ENCODE measurements at regions of chr5 and their contacts with region 1.

Region 1: GRCh38 chr5:94793113-94793815 is 174.8 kb downstream of the SLF1 start:
- DNase-seq: peak; percentile 46
- H3K4me3 Mint-ChIP-seq: peak overlapping the region; percentile 24
- H3K27ac Mint-ChIP-seq: peak overlapping the region; percentile 88
- H3K4me1 Mint-ChIP-seq: peaks cover 32% of the 10 kb centered on the region
- H3K27me3 Mint-ChIP-seq: no peaks in the 10 kb centered on the region

Region 2: GRCh38 chr5:93620487-93621326 is 1172.6 kb before region 1 on chr5:
- CTCF ChIA-PET with region 1: no interaction called
- intact Hi-C with region 1: loop called (anchors 2 kb)
- DNase-seq: peak; percentile 64
- H3K4me3 Mint-ChIP-seq: peak overlapping the region; percentile 76
- H3K27ac Mint-ChIP-seq: no peak overlapping the region
- H3K4me1 Mint-ChIP-seq: peaks cover 24% of the 10 kb centered on the region
- H3K27me3 Mint-ChIP-seq: peaks cover 43% of the 10 kb centered on the region

Region 3: GRCh38 chr5:94389515-94389899 is 403.8 kb before region 1 on chr5:
- CTCF ChIA-PET with region 1: no interaction called
- intact Hi-C with region 1: loop called (anchors 1 kb)
- DNase-seq: no peak
- H3K4me3 Mint-ChIP-seq: no peak overlapping the region
- H3K27ac Mint-ChIP-seq: no peak overlapping the region
- H3K4me1 Mint-ChIP-seq: peaks cover 3% of the 10 kb centered on the region
- H3K27me3 Mint-ChIP-seq: no peaks in the 10 kb centered on the region

Region 4: DNA sequence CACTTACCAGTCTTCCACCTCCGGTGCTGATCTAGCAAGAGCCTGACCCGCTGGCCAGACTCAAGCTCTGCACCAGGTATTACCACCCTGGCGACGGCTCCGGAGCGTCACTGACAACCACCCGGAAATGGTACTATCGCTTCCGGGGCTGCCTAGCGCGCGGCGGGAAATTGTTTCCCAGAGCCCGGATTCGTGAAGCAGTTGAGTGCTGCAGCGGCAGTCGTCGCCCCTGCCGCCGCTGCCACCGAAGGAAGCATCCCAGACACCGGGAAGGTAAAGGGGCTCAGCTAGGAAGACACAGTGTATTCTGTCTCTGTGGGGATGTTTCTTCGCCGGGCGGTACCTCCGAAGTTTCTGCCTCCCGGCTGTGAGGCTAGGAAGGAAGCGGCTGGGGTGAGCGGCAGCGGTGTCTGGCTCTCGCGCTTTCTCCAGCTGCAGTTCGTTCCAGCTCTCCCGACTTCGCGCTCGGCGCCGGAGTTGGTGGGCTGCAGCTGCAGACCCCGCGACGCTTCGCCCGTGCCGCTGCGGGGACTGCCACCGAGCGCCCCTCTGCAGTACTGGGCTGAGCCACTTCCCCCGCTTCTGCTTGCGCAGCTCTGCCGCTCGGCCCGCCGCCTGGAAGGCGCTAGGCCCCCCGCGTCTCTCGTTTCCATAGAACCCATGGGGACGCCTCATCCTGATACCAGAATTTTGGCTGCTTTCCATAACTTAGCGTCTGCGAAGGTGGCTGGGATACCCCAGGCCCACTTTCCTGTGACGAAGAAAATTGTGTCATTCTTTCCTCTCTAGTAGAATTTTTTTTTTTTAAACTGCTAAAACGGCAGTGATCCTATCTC is 174.6 kb before region 1 on chr5 and contains the starts of genes KIAA0825 and SLF1:
- CTCF ChIA-PET with region 1: no interaction called
- intact Hi-C with region 1: loop called (anchors 1 kb)
- DNase-seq: peak; percentile 93
- H3K4me3 Mint-ChIP-seq: peak within 1 kb of the TSS; percentile 96
- H3K27ac Mint-ChIP-seq: peak within 1 kb of the TSS; percentile 93
- H3K4me1 Mint-ChIP-seq: peaks cover 34% of the 10 kb centered on the region
- H3K27me3 Mint-ChIP-seq: no peaks in the 10 kb centered on the region
- total RNA-seq, gene KIAA0825: 0.07 to 0.24 TPM
- total RNA-seq, gene SLF1: 12.4 to 12.8 TPM

Region 5: GRCh38 chr5:94751460-94751859 is 41.8 kb before region 1 on chr5:
- CTCF ChIA-PET with region 1: no interaction called
- intact Hi-C with region 1: loop called (anchors 1 kb)
- DNase-seq: no peak
- H3K4me3 Mint-ChIP-seq: no peak overlapping the region
- H3K27ac Mint-ChIP-seq: no peak overlapping the region
- H3K4me1 Mint-ChIP-seq: peaks cover 2% of the 10 kb centered on the region
- H3K27me3 Mint-ChIP-seq: peaks cover 3% of the 10 kb centered on the region

Region 6: DNA sequence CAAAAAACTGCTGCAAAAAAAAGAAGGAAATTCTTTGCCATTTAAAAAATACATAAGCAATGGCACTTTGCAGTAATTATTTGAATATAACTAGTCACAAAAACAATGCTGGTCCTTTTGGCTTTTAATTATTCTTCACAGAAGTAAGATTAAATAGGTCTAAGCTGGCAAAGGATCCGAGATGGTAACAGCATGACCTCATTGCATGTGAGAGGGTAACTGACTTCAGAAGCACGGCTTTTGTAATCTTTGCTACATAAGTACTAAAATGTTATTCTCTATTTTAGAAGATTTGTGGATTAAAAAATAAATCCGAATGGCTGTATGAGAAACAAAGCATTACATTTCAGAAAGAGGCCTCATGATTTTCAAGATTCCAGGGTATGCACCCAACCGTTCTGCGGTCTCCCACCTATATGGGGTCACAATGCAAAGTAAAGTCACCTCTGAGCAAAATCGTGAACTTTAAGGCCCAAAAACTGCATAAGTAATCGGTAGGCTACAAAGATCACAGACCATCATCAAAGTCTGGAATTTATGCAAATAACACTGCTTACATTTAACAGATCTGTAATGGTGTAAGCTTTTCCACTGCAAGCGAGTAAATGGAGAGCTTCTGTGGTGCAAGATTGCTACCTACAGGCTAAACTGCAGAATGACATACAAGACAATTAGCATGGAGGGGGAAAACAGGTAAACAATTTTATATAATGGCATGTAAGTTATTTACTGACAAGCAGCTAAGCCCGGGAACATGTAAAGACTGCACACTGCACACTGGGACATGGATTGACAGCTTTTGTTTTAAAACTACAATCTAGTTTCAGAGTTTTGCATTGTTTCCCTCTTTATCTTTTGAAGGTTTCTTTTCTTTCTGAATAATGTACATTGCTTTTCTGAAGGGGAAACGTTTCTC is 56.8 kb after region 1 on chr5:
- CTCF ChIA-PET with region 1: no interaction called
- intact Hi-C with region 1: loop called (anchors 1 kb)
- DNase-seq: peak; percentile 40
- H3K4me3 Mint-ChIP-seq: no peak overlapping the region
- H3K27ac Mint-ChIP-seq: no peak overlapping the region
- H3K4me1 Mint-ChIP-seq: peaks cover 3% of the 10 kb centered on the region
- H3K27me3 Mint-ChIP-seq: peaks cover 6% of the 10 kb centered on the region

Region 7: GRCh38 chr5:95591490-95591901 is 798.2 kb after region 1 on chr5:
- CTCF ChIA-PET with region 1: no interaction called
- intact Hi-C with region 1: loop called (anchors 2 kb)
- DNase-seq: no peak
- H3K4me3 Mint-ChIP-seq: no peak overlapping the region
- H3K27ac Mint-ChIP-seq: no peak overlapping the region
- H3K4me1 Mint-ChIP-seq: peaks cover 25% of the 10 kb centered on the region
- H3K27me3 Mint-ChIP-seq: no peaks in the 10 kb centered on the region

Measured in activated naive CD4-positive, alpha-beta T cell treated with anti-CD3 and anti-CD28 coated beads for 36 hours (primary cell).